ENCODE measurements at regions of chr17 and their contacts with region 1.

Region 1: GRCh38 chr17:42193969-42194899 is at the start of gene GHDC:
- DNase-seq: peak; percentile 80
- ATAC-seq: peak; percentile 92
- H3K4me3 Mint-ChIP-seq: peak within 1 kb of the TSS; percentile 93
- H3K27ac Mint-ChIP-seq: peak within 1 kb of the TSS; percentile 91
- H3K4me1 Mint-ChIP-seq: peaks cover 6% of the 10 kb centered on the region
- H3K27me3 Mint-ChIP-seq: no peaks in the 10 kb centered on the region
- total RNA-seq, gene GHDC: 22.0 to 23.1 TPM

Region 2: GRCh38 chr17:42183741-42184711 is 10.2 kb before region 1 on chr17:
- POLR2A ChIA-PET with region 1: interaction called, 27 read pairs
- DNase-seq: peak; percentile 93
- ATAC-seq: peak; percentile 77
- H3K4me3 Mint-ChIP-seq: peak overlapping the region; percentile 88
- H3K27ac Mint-ChIP-seq: peak overlapping the region; percentile 82
- H3K4me1 Mint-ChIP-seq: peaks cover 27% of the 10 kb centered on the region
- H3K27me3 Mint-ChIP-seq: peaks cover 34% of the 10 kb centered on the region

Region 3: GRCh38 chr17:42233941-42234340 is 39.7 kb after region 1 on chr17:
- POLR2A ChIA-PET with region 1: no interaction called
- DNase-seq: no peak
- ATAC-seq: no peak
- H3K4me3 Mint-ChIP-seq: no peak overlapping the region
- H3K27ac Mint-ChIP-seq: no peak overlapping the region
- H3K4me1 Mint-ChIP-seq: peaks cover 4% of the 10 kb centered on the region
- H3K27me3 Mint-ChIP-seq: no peaks in the 10 kb centered on the region